Left ventricle myocardium superior (tissue), 1 donor: ENCODE measurements at regions of chr20 and their contacts with region 1.

Region 1: DNA sequence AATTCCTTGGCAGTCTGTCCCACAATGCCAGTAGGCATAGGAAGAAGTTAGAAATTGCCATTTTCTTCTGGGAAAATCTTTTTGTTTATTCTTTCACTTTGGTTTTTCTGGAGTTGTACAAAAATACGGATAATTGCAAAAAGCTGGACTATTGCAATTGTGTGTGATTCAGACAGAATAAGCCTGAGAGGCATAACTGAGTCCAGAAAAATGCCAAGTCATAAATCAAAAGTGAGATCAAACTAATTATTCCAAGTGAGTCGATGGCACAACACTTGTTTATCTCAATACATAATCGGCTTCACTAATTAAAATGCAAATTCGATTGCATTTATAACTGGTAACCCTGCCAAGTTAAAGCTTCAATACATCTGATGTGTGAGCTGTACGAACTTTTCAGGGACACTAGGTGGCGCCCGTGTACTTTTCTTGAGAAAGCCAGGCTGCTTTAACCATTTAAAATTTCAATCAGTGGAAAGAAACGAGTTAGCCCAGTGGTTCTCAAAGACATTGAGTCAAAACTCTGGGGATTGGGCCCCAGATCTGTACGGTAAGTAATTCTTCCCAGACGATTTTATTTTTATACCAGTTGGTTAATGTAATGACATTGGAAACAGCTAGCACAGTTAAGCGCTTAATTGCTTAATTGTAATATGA is 102.6 kb downstream of the LAMP5 start:
- DNase-seq: peak; percentile 59
- ATAC-seq: peak; percentile 65

Region 2: DNA sequence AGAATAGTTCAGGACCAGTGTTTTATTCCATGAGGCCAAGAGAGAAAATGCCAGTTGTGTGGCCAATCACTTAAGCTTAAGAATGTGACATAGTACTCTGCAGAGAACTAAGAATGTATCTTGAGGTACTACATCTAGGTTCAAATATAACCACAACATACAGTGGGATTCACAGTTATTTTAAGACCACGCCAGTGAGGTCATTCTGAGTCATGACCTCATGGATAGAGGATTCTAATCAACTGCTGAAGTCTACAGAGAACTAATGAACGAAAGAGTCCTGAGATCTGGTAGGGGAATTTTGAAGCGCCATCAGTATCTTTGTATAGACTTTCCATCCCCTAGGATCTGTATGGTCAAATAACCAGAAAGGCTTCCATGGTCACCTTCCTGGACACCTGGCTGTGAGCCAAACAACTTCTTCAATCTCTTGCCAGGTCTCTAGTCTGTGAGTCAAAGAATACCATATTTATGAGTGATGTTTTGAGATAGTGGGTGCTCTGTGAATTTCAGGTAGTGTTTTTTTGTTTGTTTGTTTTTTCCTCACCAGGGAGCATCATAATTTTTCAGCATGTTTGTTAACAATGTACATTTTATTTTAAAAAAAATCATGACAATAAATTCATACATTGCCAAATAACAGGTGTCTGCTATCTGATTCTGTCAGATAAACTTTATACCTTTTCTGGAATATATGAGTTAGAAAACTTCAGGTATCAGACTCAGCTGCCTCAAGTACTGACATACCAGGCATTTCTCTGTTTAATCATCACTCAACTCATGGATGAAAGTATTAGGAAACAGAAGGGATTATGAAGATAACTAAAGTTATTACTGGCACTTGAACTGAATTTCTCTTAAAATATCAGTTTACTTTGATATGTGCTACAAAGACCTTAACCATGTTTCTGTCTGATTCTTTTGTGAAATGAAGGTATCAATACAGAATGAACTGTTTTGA is 330.2 kb before region 1 on chr20:
- intact Hi-C with region 1: no loop called
- DNase-seq: no peak
- ATAC-seq: no peak

Region 3: DNA sequence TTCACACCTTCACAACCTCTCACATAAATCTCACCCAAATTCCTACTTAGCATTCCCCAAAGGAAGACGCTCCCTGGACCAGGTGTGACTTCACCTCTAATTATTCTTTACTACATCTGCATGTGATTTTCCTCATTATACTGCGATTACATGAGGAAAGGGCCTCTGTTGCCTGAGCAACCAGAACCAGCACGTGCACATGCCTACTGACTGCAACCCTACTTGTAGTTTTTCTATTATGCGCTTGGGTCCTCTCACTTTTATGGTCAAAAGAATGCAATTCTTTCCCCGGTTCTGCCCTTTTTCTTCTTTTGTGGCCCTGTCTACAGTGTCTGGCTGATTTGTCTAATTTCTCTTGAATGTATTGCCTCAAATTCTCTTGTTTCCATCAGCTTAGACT is 397.5 kb after region 1 on chr20:
- intact Hi-C with region 1: no loop called
- DNase-seq: no peak
- ATAC-seq: no peak

Region 4: DNA sequence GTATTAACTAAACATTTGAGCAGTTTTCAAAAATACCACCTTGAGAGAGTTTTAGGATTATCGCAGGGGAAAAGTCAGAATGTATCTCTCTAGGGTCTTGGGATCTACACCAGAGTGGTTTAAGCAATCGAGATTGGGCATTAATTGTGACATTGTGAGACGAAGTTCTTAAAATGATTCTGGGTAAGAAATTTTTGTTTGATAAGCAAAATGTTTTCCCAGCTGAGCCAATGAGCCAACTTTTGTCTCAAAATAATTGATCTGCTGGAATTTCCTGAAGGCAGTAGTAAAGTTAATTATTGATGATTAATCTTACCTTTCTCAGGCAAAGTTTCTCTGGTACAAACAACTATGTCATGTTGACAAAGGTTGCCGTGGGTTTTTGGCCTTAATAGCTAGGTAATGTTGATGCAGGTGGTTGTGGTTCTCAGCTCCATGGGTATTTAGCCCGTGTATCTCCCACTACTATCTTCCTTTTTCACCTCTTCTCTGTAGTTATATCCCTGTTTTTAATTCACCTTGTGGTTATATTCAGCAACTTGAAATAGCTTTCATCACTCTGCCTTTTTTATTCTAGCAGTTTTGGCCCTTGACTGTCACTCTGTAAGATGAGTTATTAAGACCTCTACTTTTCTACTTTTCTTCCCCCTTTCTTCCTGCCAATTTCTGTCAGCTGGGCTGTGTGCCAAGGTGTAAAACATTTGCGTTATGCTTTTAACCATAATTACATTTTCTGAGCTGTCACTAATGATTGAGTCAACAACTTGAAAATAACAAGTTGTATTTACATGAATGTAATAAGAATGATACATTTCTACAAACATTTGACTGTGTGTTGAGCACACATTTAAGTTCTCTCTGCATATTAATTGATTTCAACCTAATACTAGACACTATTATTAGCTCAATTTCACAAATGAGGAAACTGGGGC is 1932.5 kb after region 1 on chr20:
- intact Hi-C with region 1: loop called (anchors 5 kb)
- DNase-seq: no peak
- ATAC-seq: no peak